PC-9 (cell line): ENCODE measurements at regions of chr4 and their contacts with region 1.

Region 1: GRCh38 chr4:113901994-113902787 is 77.3 kb downstream of the ARSJ start:
- DNase-seq: peak in 1 of 2 experiments; percentile 10
- H3K4me3 ChIP-seq: no peak overlapping the region
- H3K27ac ChIP-seq: no peak overlapping the region
- H3K4me1 ChIP-seq: no peaks in the 10 kb centered on the region
- H3K27me3 ChIP-seq: no peaks in the 10 kb centered on the region
- CTCF ChIP-seq: no peak

Region 2: DNA sequence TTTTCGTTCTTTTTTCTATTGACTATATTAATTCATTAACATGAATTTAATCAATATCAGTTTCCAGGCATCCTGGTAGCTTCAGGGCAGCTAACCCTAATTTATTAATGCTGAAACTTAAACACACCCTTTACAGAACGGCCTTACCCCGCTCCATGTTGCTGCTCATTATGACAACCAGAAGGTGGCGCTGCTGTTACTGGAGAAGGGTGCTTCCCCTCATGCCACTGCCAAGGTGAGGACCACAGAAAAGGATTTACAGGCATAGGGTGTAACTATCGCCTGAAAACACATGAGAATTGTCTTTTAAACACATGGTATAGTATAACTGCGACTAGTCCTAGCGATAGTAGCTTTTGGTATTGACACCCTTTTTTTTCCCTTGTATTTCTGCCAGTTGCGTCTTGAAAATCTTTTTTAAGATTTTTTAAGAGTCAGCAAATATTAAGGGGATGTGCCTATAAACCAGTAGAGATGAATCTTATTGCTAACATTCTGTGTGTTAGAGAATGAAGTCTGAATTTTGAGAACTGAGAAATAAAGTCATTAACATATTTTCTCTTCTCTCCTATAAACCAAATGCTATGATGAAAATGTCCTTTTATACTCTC is 623.8 kb before region 1 on chr4:
- CTCF ChIA-PET with region 1: no interaction called
- POLR2A ChIA-PET with region 1: no interaction called
- intact Hi-C with region 1: loop called (anchors 2 kb)
- DNase-seq: peak in 1 of 2 experiments; percentile 38
- H3K4me3 ChIP-seq: no peak overlapping the region
- H3K27ac ChIP-seq: no peak overlapping the region
- H3K4me1 ChIP-seq: no peaks in the 10 kb centered on the region
- H3K27me3 ChIP-seq: no peaks in the 10 kb centered on the region
- CTCF ChIP-seq: peak; percentile 65